ENCODE measurements at regions of chr7 and their contacts with region 1.

Region 1: DNA sequence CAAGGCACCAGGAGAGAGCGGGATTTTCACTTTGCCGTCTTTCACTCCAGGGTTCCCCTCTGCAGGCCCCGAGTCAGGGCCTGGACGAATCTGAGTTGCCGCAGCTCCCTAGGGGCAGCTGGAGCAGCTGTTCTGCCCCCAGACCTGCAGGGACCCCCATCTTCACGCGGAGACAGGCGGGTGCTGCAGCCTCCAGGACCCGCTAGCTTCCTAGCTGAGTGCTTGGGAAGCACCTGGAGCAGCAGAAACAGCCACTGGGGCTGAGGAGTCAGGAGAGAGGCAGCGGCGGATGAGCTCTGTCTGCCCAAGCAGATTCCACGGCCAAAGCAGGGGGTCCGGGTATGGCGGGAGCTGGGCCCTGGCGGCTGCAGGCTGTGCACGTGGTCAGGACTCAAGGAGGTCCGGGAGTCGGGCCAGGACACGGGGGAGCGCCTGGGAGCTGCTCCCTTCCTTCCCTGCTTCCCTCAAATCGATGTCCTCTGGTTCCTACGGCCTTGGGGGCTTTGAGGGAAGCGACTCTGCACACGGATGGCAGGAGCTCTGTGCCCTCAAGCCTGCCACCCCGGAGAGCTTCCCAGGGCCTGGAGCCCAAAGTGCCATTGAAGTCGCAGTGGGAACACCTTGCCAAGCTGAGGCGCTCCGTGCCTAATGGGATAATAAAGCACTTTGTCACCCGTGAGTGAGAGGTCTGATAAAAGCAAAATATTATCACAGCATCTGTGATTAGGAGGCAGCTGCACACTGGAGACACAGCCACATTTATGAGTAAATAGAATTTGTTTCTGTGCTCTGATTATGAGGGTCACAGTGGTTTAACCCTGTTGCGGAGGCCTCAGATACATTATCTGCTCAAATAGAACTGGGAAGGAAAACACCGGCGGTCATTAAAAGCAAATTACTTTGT is 17.2 kb downstream of the MNX1 start:
- DNase-seq: no peak

Region 2: DNA sequence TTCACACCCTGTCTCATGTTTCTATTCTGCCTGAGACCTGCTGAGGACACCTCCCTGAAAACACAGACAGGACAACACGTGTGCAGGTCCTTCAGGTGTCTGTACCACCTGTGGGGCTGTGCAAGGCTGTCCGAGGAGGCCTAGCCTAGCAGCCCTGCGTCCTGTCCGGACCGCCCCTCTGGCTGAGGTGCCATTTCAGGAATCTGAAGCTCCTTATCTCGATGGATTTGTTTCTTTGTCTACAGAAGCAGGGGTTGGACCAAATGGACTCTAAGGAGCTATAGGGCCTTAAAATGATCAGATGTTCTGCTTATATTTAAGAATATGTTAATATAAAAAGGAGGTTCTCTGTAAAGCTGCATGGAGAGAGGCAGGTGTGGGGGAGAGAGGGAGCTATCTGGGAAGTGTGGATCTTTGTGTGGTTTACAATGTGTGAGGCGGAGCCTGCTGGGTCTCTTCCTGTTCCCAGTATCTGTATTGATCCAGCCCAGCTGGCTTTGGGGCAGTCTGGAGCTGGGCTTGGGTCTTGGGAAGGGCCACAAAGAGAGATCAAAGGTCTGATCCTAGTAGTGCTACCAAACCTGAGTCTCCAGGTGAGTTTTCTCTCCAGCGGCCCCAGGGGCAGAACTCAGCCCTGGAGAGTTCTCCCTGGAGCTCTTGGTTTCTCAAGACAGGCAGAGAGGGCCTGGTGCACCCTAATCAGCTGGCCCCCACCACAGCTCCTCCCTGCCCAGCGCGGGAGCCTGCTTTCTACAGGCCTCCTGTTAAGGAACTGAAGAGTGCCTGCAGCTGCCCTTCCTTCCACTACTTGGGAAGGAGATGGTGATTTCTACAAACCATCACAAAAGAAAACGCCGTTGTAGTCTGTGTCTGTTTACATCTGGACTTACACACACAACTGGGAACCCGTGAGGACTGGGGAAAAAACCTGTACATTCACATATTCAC is 20.6 kb after region 1 on chr7:
- intact Hi-C with region 1: loop called in 1 of 2 experiments (anchors 2 kb)
- DNase-seq: peak; percentile 22

Region 3: DNA sequence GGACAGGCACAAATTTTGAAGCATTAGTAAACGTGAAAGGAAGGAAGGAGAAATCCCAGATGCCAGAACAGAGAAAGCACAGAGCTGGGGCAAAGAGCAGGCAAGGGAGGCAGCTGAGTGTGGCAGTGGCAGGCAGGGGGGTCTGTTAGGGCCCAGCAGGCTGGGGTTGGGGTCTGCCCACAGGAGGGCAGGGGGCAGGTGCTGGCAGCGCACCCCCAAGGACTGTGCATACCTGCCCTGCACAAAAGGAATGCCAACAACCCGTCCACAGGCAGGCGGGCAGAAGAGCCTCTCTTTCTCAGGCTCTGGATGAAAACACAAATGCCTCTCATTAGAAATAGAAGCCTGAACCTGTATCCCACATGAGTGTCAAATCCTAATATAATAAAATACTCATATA is 1042.1 kb after region 1 on chr7:
- intact Hi-C with region 1: loop called in 1 of 2 experiments (anchors 5 kb)
- DNase-seq: peak; percentile 52